Activated naive CD4-positive, alpha-beta T cell treated with anti-CD3 and anti-CD28 coated beads for 36 hours (primary cell): ENCODE measurements at regions of chr3 and their contacts with region 1.

Region 1: DNA sequence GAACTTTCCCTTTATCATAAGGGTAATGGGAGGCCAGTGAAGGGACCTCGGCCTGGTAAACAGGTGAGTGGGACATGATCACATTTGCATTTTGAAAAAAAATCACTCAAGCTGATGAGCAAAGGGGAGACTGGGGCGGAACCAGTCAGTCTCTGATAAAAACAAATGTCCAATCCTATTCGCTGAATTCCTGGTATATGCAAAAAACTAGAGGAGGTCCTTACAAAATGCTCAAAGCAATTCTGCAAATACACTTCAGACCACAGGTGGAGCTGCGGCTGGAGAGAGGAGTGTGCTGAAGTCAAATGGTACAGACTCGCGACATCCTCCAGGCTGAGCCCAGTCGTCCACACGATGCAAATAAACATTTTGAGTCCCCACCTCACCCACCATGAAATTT is 166.7 kb downstream of the FOXP1 start:
- DNase-seq: peak; percentile 76
- H3K4me3 Mint-ChIP-seq: peak overlapping the region; percentile 69
- H3K27ac Mint-ChIP-seq: peak overlapping the region; percentile 39
- H3K4me1 Mint-ChIP-seq: peaks cover 89% of the 10 kb centered on the region
- H3K27me3 Mint-ChIP-seq: no peaks in the 10 kb centered on the region

Region 2: GRCh38 chr3:71397046-71397445 is 19.8 kb before region 1 on chr3:
- CTCF ChIA-PET with region 1: interaction called, 16 read pairs
- intact Hi-C with region 1: loop called (anchors 1 kb)
- DNase-seq: peak; percentile 35
- H3K4me3 Mint-ChIP-seq: peak overlapping the region; percentile 5
- H3K27ac Mint-ChIP-seq: no peak overlapping the region
- H3K4me1 Mint-ChIP-seq: peaks cover 81% of the 10 kb centered on the region
- H3K27me3 Mint-ChIP-seq: no peaks in the 10 kb centered on the region

Region 3: GRCh38 chr3:71725279-71725991 is 308.6 kb after region 1 on chr3 and contains the start of gene EIF4E3:
- CTCF ChIA-PET with region 1: no interaction called
- intact Hi-C with region 1: no loop called
- DNase-seq: peak; percentile 31
- H3K4me3 Mint-ChIP-seq: peak within 1 kb of the TSS; percentile 90
- H3K27ac Mint-ChIP-seq: peak within 1 kb of the TSS; percentile 91
- H3K4me1 Mint-ChIP-seq: peaks cover 59% of the 10 kb centered on the region
- H3K27me3 Mint-ChIP-seq: no peaks in the 10 kb centered on the region
- total RNA-seq, gene EIF4E3: 25.2 to 26.2 TPM